ENCODE measurements at regions of chr9 and their contacts with region 1.

Region 1: DNA sequence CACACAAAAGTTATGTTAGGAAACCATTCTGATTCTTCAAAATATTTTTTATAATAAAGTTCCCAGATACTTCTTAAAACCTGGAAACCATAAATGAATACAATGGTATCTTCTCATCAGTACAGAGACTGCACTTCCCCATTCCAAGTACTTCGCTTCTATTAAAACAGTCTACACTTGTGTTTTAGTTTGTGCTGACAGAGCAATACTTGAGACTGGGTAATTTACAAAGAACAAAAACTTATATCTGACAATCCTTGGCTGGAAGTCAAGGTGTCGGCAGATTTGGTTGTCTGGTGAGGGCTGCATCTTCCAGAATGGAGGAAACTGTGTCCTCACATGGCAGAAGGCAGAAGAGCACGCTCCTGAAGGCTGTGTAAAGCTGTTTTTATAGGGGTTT is 70.1 kb downstream of the RFX3 start:
- DNase-seq: no peak
- H3K4me3 ChIP-seq: no peak overlapping the region
- H3K27ac ChIP-seq: no peak overlapping the region
- H3K4me1 ChIP-seq: peaks cover 0 to 10% of the 10 kb centered on the region in 2 experiments
- H3K27me3 ChIP-seq: no peaks in the 10 kb centered on the region
- CTCF ChIP-seq: no peak
- EP300 ChIP-seq: no peak
- RAD21 ChIP-seq: no peak

Region 2: DNA sequence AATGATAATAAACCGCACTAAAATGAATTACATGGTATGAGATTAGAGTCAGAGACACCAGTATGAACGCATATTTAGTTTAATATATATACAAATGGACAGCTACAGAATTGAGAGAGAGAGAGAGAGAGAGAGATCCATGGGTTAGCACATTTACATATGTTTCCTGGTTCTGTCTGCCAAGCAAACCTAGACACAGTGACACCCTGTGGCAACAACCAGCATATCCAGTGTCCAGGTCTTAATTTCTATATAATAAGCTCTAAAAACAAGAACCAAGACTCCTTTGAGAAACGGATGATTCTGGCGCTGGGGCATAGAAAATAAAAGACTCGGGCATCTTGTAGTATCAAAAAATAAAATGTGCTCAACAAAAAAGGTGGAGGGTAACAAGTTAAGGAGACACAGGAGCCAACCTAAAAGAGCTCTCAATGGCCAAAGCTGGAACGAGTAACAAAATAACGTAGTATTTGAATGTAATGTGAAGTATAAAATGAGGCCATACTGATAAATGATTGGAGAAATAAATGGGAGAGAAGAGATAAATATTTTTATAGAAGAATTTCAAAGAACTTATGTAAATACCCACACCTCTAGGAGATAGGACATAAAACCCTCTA is 14.4 kb before region 1 on chr9:
- CTCF ChIA-PET with region 1: interaction called, 10 read pairs
- POLR2A ChIA-PET with region 1: no interaction called
- DNase-seq: peak; percentile 28
- H3K4me3 ChIP-seq: no peak overlapping the region; a peak in 1 of 4 replicates
- H3K27ac ChIP-seq: no peak overlapping the region
- H3K4me1 ChIP-seq: peaks cover 0 to 2% of the 10 kb centered on the region in 2 experiments; a peak in 2 of 4 replicates
- H3K27me3 ChIP-seq: no peaks in the 10 kb centered on the region
- CTCF ChIP-seq: peak; percentile 73
- EP300 ChIP-seq: no peak
- RAD21 ChIP-seq: peak; percentile 68

Measured in SK-N-SH (cell line).